Sigmoid colon (tissue), 7 donors: ENCODE measurements at regions of chr2 and their contacts with region 1.

Region 1: DNA sequence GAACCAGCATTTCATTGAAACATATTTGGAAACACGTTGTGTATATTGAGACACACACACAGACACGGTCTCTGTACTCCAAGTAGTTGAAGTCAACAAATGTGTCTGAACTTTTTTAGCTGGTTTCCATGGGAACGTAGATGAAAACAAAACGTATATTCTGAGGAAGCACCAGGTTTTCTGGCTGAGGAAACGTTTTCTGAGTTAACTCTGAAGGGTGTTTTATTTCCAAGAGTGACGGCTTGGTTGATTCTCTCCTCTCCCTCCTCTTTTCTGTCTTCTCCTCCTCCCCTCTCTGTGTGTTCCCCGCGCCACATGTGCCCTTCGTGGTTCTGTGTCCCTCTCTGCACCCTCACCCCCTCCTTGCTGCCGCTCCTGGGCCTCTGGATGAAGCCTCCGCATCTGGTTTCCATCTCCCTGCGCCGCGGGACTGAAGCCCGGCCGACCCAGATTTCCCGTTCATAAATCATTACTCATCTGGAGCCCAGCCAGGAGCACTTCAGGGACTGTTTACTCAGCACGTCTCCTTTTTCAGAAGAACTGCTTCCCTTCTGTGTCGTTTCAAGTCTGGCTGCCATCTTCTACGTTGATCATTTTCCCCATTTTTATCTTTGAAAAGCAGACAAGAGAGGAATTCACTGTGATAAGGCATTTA is 122.7 kb downstream of the COL6A3 start:
- DNase-seq: peak; percentile 99
- H3K4me3 ChIP-seq: no peak overlapping the region
- H3K27ac ChIP-seq: peak overlapping the region; percentile 78 to 90 (median 86)
- H3K4me1 ChIP-seq: peaks cover 0 to 72% (median 52%) of the 10 kb centered on the region in 4 donors
- H3K27me3 ChIP-seq: no peaks in the 10 kb centered on the region
- CTCF ChIP-seq: no peak
- EP300 ChIP-seq: peak; percentile 84 to 95 (median 94)
- POLR2A ChIP-seq: no peak

Region 2: GRCh38 chr2:237207646-237208045 is 83.6 kb before region 1 on chr2:
- intact Hi-C with region 1: loop called (anchors 5 kb)
- DNase-seq: peak; percentile 90
- H3K4me3 ChIP-seq: no peak overlapping the region
- H3K27ac ChIP-seq: peak overlapping the region; percentile 25 to 84 (median 79)
- H3K4me1 ChIP-seq: peaks cover 0 to 46% (median 37%) of the 10 kb centered on the region in 4 donors
- H3K27me3 ChIP-seq: no peaks in the 10 kb centered on the region
- CTCF ChIP-seq: no peak
- EP300 ChIP-seq: peak in 1 of 4 donors; percentile 62
- POLR2A ChIP-seq: no peak

Region 3: GRCh38 chr2:237262838-237263771 is 28.2 kb before region 1 on chr2:
- intact Hi-C with region 1: no loop called
- DNase-seq: no peak
- H3K4me3 ChIP-seq: no peak overlapping the region
- H3K27ac ChIP-seq: peak overlapping the region; percentile 26 to 52 (median 42)
- H3K4me1 ChIP-seq: peaks cover 0 to 29% (median 19%) of the 10 kb centered on the region in 4 donors
- H3K27me3 ChIP-seq: no peaks in the 10 kb centered on the region
- CTCF ChIP-seq: no peak
- EP300 ChIP-seq: no peak
- POLR2A ChIP-seq: no peak